Natural killer cell (primary cell): ENCODE measurements at regions of chr7 and their contacts with region 1.

Region 1: DNA sequence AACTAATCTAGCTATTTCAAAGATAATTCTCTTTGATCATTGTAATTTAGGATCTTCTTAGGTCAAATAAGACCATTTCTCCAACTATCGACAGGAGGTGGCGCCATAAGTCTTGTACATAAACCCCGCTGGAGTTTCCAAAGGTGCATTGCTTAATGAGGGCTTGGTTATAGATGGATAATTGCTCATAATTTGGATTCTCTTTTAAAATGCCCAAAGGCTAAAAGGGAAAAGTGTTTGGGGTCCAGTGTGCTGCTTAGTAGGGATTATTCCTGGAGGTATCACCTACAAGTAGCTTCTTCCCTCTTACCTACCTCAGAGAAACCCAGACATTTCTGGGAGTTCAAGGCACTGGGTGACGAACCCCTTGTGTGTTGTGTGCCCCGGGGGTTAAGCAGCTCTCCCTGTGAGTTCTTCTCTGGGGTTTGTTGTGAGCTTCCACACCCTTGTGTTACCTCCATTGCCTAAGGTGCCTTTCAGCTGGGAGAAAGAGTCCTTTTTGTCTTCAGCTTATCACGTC is 75.2 kb downstream of the PAXIP1 start:
- DNase-seq: peak; percentile 60 to 91
- ATAC-seq: peak; percentile 55 to 62 (median 61)
- H3K4me3 ChIP-seq: peak overlapping the region; percentile 55
- H3K4me3 Mint-ChIP-seq: peak overlapping the region; percentile 99
- H3K27ac ChIP-seq: peak overlapping the region; percentile 89
- H3K27ac Mint-ChIP-seq: peak overlapping the region; percentile 99
- H3K4me1 ChIP-seq: peaks cover 13% of the 10 kb centered on the region
- H3K4me1 Mint-ChIP-seq: peaks cover 24 to 33% of the 10 kb centered on the region in 2 donors
- H3K27me3 ChIP-seq: no peaks in the 10 kb centered on the region
- H3K27me3 Mint-ChIP-seq: peaks cover 0 to 5% of the 10 kb centered on the region in 2 donors
- CTCF ChIP-seq: peak; percentile 79

Region 2: GRCh38 chr7:155003376-155004214 is 75.9 kb after region 1 on chr7:
- intact Hi-C with region 1: loop called (anchors 1 kb)
- DNase-seq: peak; percentile 83 to 91
- ATAC-seq: peak; percentile 89 to 94 (median 89)
- H3K4me3 ChIP-seq: peak overlapping the region; percentile 96
- H3K4me3 Mint-ChIP-seq: peak overlapping the region; percentile 89
- H3K27ac ChIP-seq: peak overlapping the region; percentile 67
- H3K27ac Mint-ChIP-seq: peak overlapping the region; percentile 73 to 81
- H3K4me1 ChIP-seq: peaks cover 14% of the 10 kb centered on the region
- H3K4me1 Mint-ChIP-seq: peaks cover 5 to 12% of the 10 kb centered on the region in 2 donors
- H3K27me3 ChIP-seq: no peaks in the 10 kb centered on the region
- H3K27me3 Mint-ChIP-seq: no peaks in the 10 kb centered on the region
- CTCF ChIP-seq: no peak

Region 3: DNA sequence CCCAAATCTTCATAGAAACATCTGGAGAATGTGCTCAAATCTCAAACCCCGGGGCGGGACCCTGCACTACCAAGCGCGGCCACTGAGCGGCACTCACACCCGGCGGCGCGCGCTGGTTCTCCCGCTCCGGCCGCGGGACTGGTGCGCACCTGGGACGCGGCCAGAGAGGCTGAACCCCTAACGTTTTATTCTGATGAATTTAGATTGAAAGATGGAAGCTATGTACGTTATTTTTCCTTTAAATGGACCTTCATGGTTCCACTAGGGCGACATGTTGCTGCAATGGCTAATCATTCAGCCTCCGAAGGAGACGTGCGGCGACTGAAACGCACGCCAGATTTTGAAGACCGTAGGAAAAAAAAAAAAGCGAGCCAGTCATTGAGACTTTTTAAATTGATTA is 263.0 kb after region 1 on chr7:
- intact Hi-C with region 1: loop called (anchors 5 kb)
- DNase-seq: peak; percentile 66 to 70
- ATAC-seq: peak; percentile 77 to 99 (median 92)
- H3K4me3 ChIP-seq: no peak overlapping the region
- H3K4me3 Mint-ChIP-seq: no peak overlapping the region
- H3K27ac ChIP-seq: no peak overlapping the region
- H3K27ac Mint-ChIP-seq: no peak overlapping the region
- H3K4me1 ChIP-seq: peaks cover 3% of the 10 kb centered on the region
- H3K4me1 Mint-ChIP-seq: peaks cover 5 to 11% of the 10 kb centered on the region in 2 donors
- H3K27me3 ChIP-seq: no peaks in the 10 kb centered on the region
- H3K27me3 Mint-ChIP-seq: peaks cover 14 to 22% of the 10 kb centered on the region in 2 donors
- CTCF ChIP-seq: peak; percentile 83

Region 4: GRCh38 chr7:155298834-155299534 is 371.3 kb after region 1 on chr7:
- intact Hi-C with region 1: loop called (anchors 1 kb)
- DNase-seq: peak; percentile 93 to 98
- ATAC-seq: peak; percentile 66 to 78 (median 71)
- H3K4me3 ChIP-seq: peak overlapping the region; percentile 58
- H3K4me3 Mint-ChIP-seq: peak overlapping the region; percentile 99
- H3K27ac ChIP-seq: peak overlapping the region; percentile 94
- H3K27ac Mint-ChIP-seq: peak overlapping the region; percentile 95 to 97
- H3K4me1 ChIP-seq: peaks cover 34% of the 10 kb centered on the region
- H3K4me1 Mint-ChIP-seq: peaks cover 56 to 58% of the 10 kb centered on the region in 2 donors
- H3K27me3 ChIP-seq: no peaks in the 10 kb centered on the region
- H3K27me3 Mint-ChIP-seq: no peaks in the 10 kb centered on the region
- CTCF ChIP-seq: no peak